ENCODE measurements at regions of chr17 and their contacts with region 1.

Region 1: GRCh38 chr17:76506408-76507349 is 5.5 kb upstream of the RHBDF2 start:
- DNase-seq: peak; percentile 92
- ATAC-seq: peak; percentile 89
- H3K4me3 Mint-ChIP-seq: no peak overlapping the region
- H3K27ac Mint-ChIP-seq: peak overlapping the region; percentile 37
- H3K4me1 Mint-ChIP-seq: peaks cover 12% of the 10 kb centered on the region
- H3K27me3 Mint-ChIP-seq: no peaks in the 10 kb centered on the region

Region 2: GRCh38 chr17:76307299-76307965 is 199.2 kb before region 1 on chr17:
- CTCF ChIA-PET with region 1: no interaction called
- POLR2A ChIA-PET with region 1: no interaction called
- intact Hi-C with region 1: loop called (anchors 1 to 2 kb)
- DNase-seq: no peak
- ATAC-seq: no peak
- H3K4me3 Mint-ChIP-seq: no peak overlapping the region
- H3K27ac Mint-ChIP-seq: no peak overlapping the region
- H3K4me1 Mint-ChIP-seq: no peaks in the 10 kb centered on the region
- H3K27me3 Mint-ChIP-seq: no peaks in the 10 kb centered on the region

Region 3: DNA sequence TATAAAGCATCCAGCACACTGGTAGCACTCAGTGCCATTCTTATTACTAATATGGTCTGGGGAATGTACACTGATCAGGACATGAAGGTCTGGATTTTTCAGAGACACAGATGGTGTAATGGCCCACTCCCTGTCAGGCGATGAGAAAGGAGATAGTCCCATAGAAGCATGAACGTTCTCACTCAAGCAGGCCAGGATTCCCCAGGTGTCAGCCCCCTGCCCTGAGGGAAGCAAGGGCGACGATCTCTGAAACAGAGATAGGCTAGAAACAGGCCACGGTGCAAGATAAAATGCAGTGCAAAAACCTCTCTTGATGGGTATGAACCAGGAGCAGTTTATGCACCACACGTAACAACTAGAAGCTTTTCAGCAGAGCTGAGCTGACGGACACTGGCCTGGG is 163.6 kb before region 1 on chr17:
- CTCF ChIA-PET with region 1: no interaction called
- POLR2A ChIA-PET with region 1: no interaction called
- intact Hi-C with region 1: no loop called
- DNase-seq: no peak
- ATAC-seq: no peak
- H3K4me3 Mint-ChIP-seq: no peak overlapping the region
- H3K27ac Mint-ChIP-seq: no peak overlapping the region
- H3K4me1 Mint-ChIP-seq: no peaks in the 10 kb centered on the region
- H3K27me3 Mint-ChIP-seq: no peaks in the 10 kb centered on the region

Region 4: DNA sequence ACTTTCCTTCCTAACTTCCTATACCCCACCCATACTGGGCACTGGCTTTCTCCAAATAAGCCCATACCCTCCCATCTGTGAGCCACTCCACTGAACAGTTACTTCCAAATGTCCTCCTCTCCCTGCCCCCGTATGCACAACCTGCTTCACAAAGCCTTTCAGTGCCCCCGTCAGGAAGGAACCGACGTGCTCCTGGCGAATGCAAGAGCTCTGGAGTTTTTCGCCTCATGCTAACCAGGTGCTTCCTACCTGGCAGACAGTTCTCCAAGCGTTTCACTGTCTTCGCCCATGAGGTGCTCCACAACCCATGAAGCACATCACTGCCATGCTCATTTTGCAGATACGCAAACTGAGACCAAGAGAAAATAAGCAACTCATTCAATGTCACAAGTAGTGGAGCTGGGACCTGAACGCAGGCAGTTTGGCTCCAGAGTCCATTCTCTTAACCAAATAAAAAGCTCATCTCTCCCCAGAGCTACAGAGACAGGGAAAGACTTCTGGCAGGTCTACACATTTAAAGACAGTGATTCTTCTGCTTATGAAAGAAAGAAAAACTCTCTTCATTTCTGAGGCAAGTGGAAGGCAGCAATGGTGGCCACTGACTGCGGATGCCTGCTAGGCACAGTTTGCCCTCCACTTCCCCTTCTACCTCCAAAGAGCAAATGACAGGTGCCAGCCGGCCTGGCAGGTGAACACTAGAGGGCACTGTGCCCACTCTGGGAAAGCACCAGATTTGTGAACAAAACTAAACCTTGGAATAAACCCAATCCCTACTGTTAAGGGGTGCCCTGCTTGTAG is 98.4 kb before region 1 on chr17:
- CTCF ChIA-PET with region 1: interaction called, 21 read pairs
- POLR2A ChIA-PET with region 1: no interaction called
- intact Hi-C with region 1: loop called (anchors 1 kb)
- DNase-seq: peak; percentile 84
- ATAC-seq: peak; percentile 90
- H3K4me3 Mint-ChIP-seq: no peak overlapping the region
- H3K27ac Mint-ChIP-seq: no peak overlapping the region
- H3K4me1 Mint-ChIP-seq: peaks cover 8% of the 10 kb centered on the region
- H3K27me3 Mint-ChIP-seq: no peaks in the 10 kb centered on the region

Region 5: DNA sequence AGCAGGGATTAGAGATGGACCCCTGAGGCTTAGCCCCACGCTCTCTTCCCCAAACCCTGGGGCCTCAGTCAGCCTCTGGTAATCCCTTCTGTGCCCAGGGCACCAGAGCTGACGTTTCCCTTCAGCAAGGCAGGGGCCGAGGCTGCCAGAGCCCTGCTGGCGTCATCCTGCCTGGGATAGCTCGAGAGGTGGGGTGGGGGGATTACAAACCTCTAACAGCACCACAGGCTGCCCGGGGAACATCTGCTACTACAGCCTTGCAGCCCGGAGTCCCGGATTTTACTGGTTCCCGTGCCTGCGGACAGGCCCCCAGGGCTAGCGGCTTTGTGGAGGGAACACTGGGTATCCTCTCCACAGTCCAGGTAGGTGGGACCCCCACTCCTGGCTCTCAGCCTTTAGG is 39.3 kb before region 1 on chr17 and contains the start of gene AANAT:
- CTCF ChIA-PET with region 1: interaction called, 26 read pairs
- POLR2A ChIA-PET with region 1: interaction called, 3 read pairs
- intact Hi-C with region 1: loop called (anchors 1 kb)
- DNase-seq: no peak
- ATAC-seq: no peak
- H3K4me3 Mint-ChIP-seq: no peak within 1 kb of the TSS
- H3K27ac Mint-ChIP-seq: no peak within 1 kb of the TSS
- H3K4me1 Mint-ChIP-seq: no peaks in the 10 kb centered on the region
- H3K27me3 Mint-ChIP-seq: no peaks in the 10 kb centered on the region
- total RNA-seq, gene AANAT: 0.16 TPM in 1 of 2 experiments, not detected in the other

Region 6: DNA sequence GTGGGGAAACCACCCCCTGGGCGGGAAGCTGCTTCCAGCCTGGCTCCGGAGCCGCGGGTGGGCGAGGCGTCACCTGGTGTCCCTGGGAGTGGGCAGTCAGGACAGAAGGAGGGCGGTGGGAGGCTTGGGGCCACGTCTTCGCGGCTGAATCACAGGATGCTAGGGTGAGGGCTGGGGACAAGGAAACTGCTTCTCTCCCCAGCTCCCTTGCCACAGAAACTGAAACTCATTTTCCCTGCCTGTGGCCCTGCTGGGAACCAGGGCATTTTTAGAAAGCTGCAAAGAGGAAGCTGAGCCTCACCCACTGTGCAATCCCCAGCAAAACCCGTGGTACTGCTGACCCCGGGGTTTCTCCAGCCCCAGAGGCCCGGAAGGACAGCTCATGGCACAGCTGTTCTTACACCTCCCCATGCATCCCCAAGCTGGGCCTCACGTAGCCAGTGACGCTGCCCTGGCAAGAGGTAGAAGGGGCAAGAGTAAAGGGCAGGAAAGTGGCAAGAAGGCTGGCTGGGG is 13.6 kb before region 1 on chr17:
- CTCF ChIA-PET with region 1: interaction called, 14 read pairs
- POLR2A ChIA-PET with region 1: interaction called, 3 read pairs
- intact Hi-C with region 1: loop called in 1 of 2 experiments (anchors 1 kb)
- DNase-seq: peak; percentile 78
- ATAC-seq: peak; percentile 80
- H3K4me3 Mint-ChIP-seq: peak overlapping the region; percentile 48
- H3K27ac Mint-ChIP-seq: peak overlapping the region; percentile 81
- H3K4me1 Mint-ChIP-seq: peaks cover 34% of the 10 kb centered on the region
- H3K27me3 Mint-ChIP-seq: no peaks in the 10 kb centered on the region

Region 7: GRCh38 chr17:77109764-77110359 is 603.2 kb after region 1 on chr17:
- CTCF ChIA-PET with region 1: no interaction called
- POLR2A ChIA-PET with region 1: no interaction called
- intact Hi-C with region 1: no loop called
- DNase-seq: no peak
- ATAC-seq: no peak
- H3K4me3 Mint-ChIP-seq: no peak overlapping the region
- H3K27ac Mint-ChIP-seq: peak overlapping the region; percentile 29
- H3K4me1 Mint-ChIP-seq: peaks cover 15% of the 10 kb centered on the region
- H3K27me3 Mint-ChIP-seq: no peaks in the 10 kb centered on the region